Activated CD8-positive, alpha-beta memory T cell treated with anti-CD3 and anti-CD28 coated beads, Interleukin-2, amount 10 ng/mL, durations not matched to agents 7 days and 5 days (primary cell): ENCODE measurements at regions of chr1 and their contacts with region 1.

Region 1: GRCh38 chr1:226121587-226122400 is 59.3 kb downstream of the H3-3A start:
- DNase-seq: peak; percentile 77
- ATAC-seq: peak; percentile 82
- H3K4me3 Mint-ChIP-seq: peak overlapping the region; percentile 70
- H3K27ac Mint-ChIP-seq: peak overlapping the region; percentile 83
- H3K4me1 Mint-ChIP-seq: peaks cover 30% of the 10 kb centered on the region
- H3K27me3 Mint-ChIP-seq: no peaks in the 10 kb centered on the region

Region 2: GRCh38 chr1:226062558-226063223 is 59.1 kb before region 1 on chr1 and contains the start of gene H3-3A:
- CTCF ChIA-PET with region 1: interaction called, 56 read pairs
- DNase-seq: peak; percentile 97
- ATAC-seq: peak; percentile 87
- H3K4me3 Mint-ChIP-seq: peak within 1 kb of the TSS; percentile 99
- H3K27ac Mint-ChIP-seq: peak within 1 kb of the TSS; percentile 100
- H3K4me1 Mint-ChIP-seq: peaks cover 33% of the 10 kb centered on the region
- H3K27me3 Mint-ChIP-seq: no peaks in the 10 kb centered on the region
- total RNA-seq, gene H3-3A: 384 to 451 TPM

Region 3: GRCh38 chr1:226132728-226133503 is 11.1 kb after region 1 on chr1:
- CTCF ChIA-PET with region 1: interaction called, 16 read pairs
- DNase-seq: peak; percentile 37
- ATAC-seq: no peak
- H3K4me3 Mint-ChIP-seq: no peak overlapping the region
- H3K27ac Mint-ChIP-seq: no peak overlapping the region
- H3K4me1 Mint-ChIP-seq: peaks cover 4% of the 10 kb centered on the region
- H3K27me3 Mint-ChIP-seq: no peaks in the 10 kb centered on the region

Region 4: DNA sequence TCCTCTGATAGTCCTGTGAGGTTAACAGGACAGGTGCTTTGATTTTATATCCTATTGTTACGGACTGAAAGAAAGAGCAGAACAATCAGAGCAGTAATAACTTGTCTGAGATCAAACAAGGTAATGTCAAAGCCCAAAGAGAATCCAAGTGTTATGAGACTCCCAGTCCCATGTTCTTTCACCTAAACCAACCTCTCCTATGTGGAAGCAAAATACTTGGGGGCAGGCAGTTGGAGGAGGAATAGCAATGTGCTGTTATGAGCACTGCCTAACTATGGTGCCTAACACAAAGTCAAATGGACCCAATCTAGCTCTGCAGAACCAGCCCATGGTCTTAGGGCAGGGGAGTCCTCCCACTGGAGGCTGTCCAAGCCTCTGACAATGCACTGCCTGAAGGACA is 36.7 kb after region 1 on chr1:
- CTCF ChIA-PET with region 1: interaction called, 19 read pairs
- DNase-seq: no peak
- ATAC-seq: no peak
- H3K4me3 Mint-ChIP-seq: no peak overlapping the region
- H3K27ac Mint-ChIP-seq: peak overlapping the region; percentile 68
- H3K4me1 Mint-ChIP-seq: peaks cover 22% of the 10 kb centered on the region
- H3K27me3 Mint-ChIP-seq: no peaks in the 10 kb centered on the region

Region 5: GRCh38 chr1:226201029-226201593 is 79.3 kb after region 1 on chr1:
- CTCF ChIA-PET with region 1: interaction called, 205 read pairs
- DNase-seq: no peak
- ATAC-seq: no peak
- H3K4me3 Mint-ChIP-seq: no peak overlapping the region
- H3K27ac Mint-ChIP-seq: no peak overlapping the region
- H3K4me1 Mint-ChIP-seq: no peaks in the 10 kb centered on the region
- H3K27me3 Mint-ChIP-seq: peaks cover 16% of the 10 kb centered on the region

Region 6: GRCh38 chr1:226248091-226248490 is 126.3 kb after region 1 on chr1:
- CTCF ChIA-PET with region 1: no interaction called
- DNase-seq: no peak
- ATAC-seq: no peak
- H3K4me3 Mint-ChIP-seq: no peak overlapping the region
- H3K27ac Mint-ChIP-seq: no peak overlapping the region
- H3K4me1 Mint-ChIP-seq: no peaks in the 10 kb centered on the region
- H3K27me3 Mint-ChIP-seq: no peaks in the 10 kb centered on the region

Region 7: GRCh38 chr1:226332947-226333346 is 211.2 kb after region 1 on chr1:
- CTCF ChIA-PET with region 1: interaction called, 69 read pairs
- DNase-seq: no peak
- ATAC-seq: no peak
- H3K4me3 Mint-ChIP-seq: peak overlapping the region; percentile 59
- H3K27ac Mint-ChIP-seq: peak overlapping the region; percentile 29
- H3K4me1 Mint-ChIP-seq: peaks cover 20% of the 10 kb centered on the region
- H3K27me3 Mint-ChIP-seq: peaks cover 3% of the 10 kb centered on the region